ENCODE measurements at regions of chr7 and their contacts with region 1.

Region 1: DNA sequence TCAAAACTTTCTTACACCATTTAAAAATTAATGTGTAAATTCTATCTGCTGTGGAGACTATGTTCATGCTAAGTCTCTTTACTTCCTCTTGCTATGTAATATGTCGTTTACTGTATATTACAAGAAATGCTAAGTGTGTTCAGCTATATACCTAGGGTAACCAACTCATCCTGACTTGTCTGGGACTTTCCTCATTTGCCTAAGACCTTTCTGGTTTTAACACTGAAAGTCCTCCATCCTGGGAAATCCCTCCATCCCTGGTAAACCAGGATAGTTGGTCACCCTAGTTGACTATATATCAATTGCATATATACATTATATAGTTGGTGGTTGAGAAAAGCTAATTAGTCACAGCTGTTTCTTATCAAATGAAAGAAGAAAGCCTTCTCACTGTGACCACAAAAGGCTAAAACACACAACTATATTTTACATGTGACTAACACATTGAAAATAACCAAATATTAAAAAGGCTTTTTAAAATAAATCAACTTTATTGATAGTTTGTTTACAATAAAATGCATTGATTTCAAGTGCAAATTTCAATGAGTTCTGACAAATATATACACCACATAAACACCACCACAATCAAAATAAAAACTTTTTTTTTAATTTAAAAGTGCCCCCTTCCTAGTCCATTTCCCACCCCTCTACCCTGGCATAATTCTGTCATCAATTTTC is 167.7 kb upstream of the INHBA start:
- DNase-seq: peak; percentile 67 to 98 (median 67)
- H3K4me3 ChIP-seq: peak overlapping the region in 2 of 3 experiments; percentile 25 to 42
- H3K4me3 Mint-ChIP-seq: peak overlapping the region in 1 of 2 donors; percentile 65
- H3K27ac ChIP-seq: peak overlapping the region in 1 of 2 donors; percentile 88
- H3K27ac Mint-ChIP-seq: peak overlapping the region; percentile 90 to 97 (median 95)
- H3K4me1 ChIP-seq: peaks cover 20 to 25% of the 10 kb centered on the region in 2 donors
- H3K4me1 Mint-ChIP-seq: peaks cover 32% of the 10 kb centered on the region
- H3K27me3 ChIP-seq: no peaks in the 10 kb centered on the region
- H3K27me3 Mint-ChIP-seq: peaks cover 0 to 1% (median 0%) of the 10 kb centered on the region in 3 donors
- CTCF ChIP-seq: no peak

Region 2: GRCh38 chr7:41779918-41780317 is 90.7 kb before region 1 on chr7:
- intact Hi-C with region 1: loop called in 1 of 2 experiments (anchors 1 kb)
- DNase-seq: peak; percentile 68 to 88 (median 80)
- H3K4me3 ChIP-seq: peak overlapping the region in 1 of 3 experiments; percentile 35
- H3K4me3 Mint-ChIP-seq: peak overlapping the region in 1 of 2 donors; percentile 51
- H3K27ac ChIP-seq: peak overlapping the region; percentile 76 to 88
- H3K27ac Mint-ChIP-seq: peak overlapping the region; percentile 92 to 98 (median 95)
- H3K4me1 ChIP-seq: peaks cover 42 to 45% of the 10 kb centered on the region in 2 donors
- H3K4me1 Mint-ChIP-seq: peaks cover 45% of the 10 kb centered on the region
- H3K27me3 ChIP-seq: no peaks in the 10 kb centered on the region
- H3K27me3 Mint-ChIP-seq: peaks cover 0 to 3% (median 0%) of the 10 kb centered on the region in 3 donors
- CTCF ChIP-seq: no peak

Region 3: GRCh38 chr7:41834805-41835694 is 35.5 kb before region 1 on chr7:
- intact Hi-C with region 1: loop called in 1 of 2 experiments (anchors 5 kb)
- DNase-seq: no peak
- H3K4me3 ChIP-seq: no peak overlapping the region
- H3K4me3 Mint-ChIP-seq: no peak overlapping the region
- H3K27ac ChIP-seq: no peak overlapping the region
- H3K27ac Mint-ChIP-seq: peak overlapping the region in 3 of 7 donors; percentile 13 to 46 (median 16)
- H3K4me1 ChIP-seq: peaks cover 0 to 9% of the 10 kb centered on the region in 2 donors
- H3K4me1 Mint-ChIP-seq: peaks cover 10% of the 10 kb centered on the region
- H3K27me3 ChIP-seq: no peaks in the 10 kb centered on the region
- H3K27me3 Mint-ChIP-seq: peaks cover 0 to 4% (median 2%) of the 10 kb centered on the region in 3 donors
- CTCF ChIP-seq: no peak

Region 4: DNA sequence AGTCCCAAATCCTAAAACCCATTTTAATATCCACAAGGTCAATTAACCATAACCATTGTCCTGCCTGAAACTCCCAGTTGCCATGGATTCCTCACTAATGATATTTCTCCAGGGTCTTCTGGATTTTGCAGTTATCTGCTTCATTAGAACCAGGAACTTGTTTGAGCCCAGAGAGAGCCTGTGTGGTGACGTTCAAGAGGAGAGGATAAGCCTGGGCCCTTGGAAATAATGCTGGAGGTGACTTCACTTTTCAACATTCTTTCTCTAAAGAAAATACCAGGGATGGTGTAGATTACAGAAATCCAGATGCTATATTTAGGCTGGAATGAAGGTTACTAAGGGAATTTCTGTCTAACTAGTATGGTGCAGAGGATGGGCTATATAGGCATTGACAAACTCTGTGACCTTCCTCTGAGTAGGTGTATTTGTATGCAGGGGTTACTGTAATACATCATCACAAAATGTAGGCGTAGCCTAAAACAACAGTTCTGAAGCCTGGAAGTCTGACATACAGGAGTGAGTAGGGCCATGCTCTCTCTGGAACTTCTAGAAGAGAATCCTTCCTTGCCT is 12.5 kb before region 1 on chr7:
- intact Hi-C with region 1: loop called in 1 of 2 experiments (anchors 1 kb)
- DNase-seq: no peak
- H3K4me3 ChIP-seq: no peak overlapping the region
- H3K4me3 Mint-ChIP-seq: no peak overlapping the region
- H3K27ac ChIP-seq: no peak overlapping the region
- H3K27ac Mint-ChIP-seq: no peak overlapping the region
- H3K4me1 ChIP-seq: peaks cover 7 to 8% of the 10 kb centered on the region in 2 donors
- H3K4me1 Mint-ChIP-seq: peaks cover 11% of the 10 kb centered on the region
- H3K27me3 ChIP-seq: no peaks in the 10 kb centered on the region
- H3K27me3 Mint-ChIP-seq: peaks cover 0 to 2% (median 2%) of the 10 kb centered on the region in 3 donors
- CTCF ChIP-seq: no peak

Region 5: GRCh38 chr7:41911792-41912191 is 41.2 kb after region 1 on chr7:
- intact Hi-C with region 1: no loop called
- DNase-seq: no peak
- H3K4me3 ChIP-seq: no peak overlapping the region
- H3K4me3 Mint-ChIP-seq: no peak overlapping the region
- H3K27ac ChIP-seq: no peak overlapping the region
- H3K27ac Mint-ChIP-seq: no peak overlapping the region
- H3K4me1 ChIP-seq: no peaks in the 10 kb centered on the region
- H3K4me1 Mint-ChIP-seq: no peaks in the 10 kb centered on the region
- H3K27me3 ChIP-seq: no peaks in the 10 kb centered on the region
- H3K27me3 Mint-ChIP-seq: peaks cover 0 to 2% (median 0%) of the 10 kb centered on the region in 3 donors
- CTCF ChIP-seq: no peak

Measured in CD14-positive monocyte (primary cell).